Transverse colon (tissue), 4 donors: ENCODE measurements at regions of chr21 and their contacts with region 1.

Region 1: DNA sequence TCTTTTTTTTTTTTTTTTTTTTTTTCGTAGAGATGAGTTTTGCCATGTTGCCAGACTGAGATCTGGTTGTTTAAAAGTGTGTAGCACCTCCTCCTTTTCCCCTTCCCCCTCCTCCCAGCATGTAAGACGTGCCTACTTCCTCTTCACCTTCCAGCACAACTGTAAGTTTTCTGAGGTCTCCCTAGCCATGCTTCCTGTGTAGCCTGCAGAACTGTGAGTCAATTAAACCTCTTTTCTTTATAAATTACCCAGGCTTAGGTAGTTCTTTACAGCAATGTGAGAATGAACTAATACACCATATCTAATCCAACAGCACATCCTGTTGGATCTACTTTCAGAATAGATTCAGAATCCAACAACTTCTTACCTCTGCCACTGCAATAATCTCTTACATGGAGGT is 111.1 kb downstream of the CLIC6 start:
- DNase-seq: no peak
- H3K4me3 ChIP-seq: no peak overlapping the region
- H3K27ac ChIP-seq: no peak overlapping the region
- H3K4me1 ChIP-seq: peaks cover 0 to 4% (median 0%) of the 10 kb centered on the region in 4 donors
- H3K27me3 ChIP-seq: no peaks in the 10 kb centered on the region
- CTCF ChIP-seq: no peak
- EP300 ChIP-seq: no peak
- POLR2A ChIP-seq: no peak

Region 2: DNA sequence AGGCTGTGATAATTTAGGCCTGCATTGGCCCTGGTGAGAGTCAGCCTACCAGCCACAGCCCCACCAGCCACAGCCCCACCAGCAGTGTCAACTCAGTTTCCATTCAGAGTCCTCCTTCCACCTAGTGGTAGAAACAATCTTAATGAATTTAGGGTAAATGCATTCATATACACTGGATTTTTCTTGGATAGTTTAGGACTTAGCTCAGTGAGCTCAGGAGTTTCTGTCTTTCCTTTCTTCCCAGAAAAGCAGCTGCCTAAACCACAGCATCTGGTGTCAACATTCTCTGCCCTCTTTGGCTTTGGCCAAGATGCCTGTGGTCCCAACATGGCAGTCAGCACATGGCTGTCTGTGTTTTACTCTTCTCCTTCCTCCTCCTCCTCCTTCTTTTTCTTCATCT is 17.1 kb before region 1 on chr21:
- in situ Hi-C with region 1: no loop called
- intact Hi-C with region 1: no loop called
- DNase-seq: no peak
- H3K4me3 ChIP-seq: no peak overlapping the region
- H3K27ac ChIP-seq: no peak overlapping the region
- H3K4me1 ChIP-seq: no peaks in the 10 kb centered on the region
- H3K27me3 ChIP-seq: no peaks in the 10 kb centered on the region
- CTCF ChIP-seq: no peak
- EP300 ChIP-seq: no peak
- POLR2A ChIP-seq: no peak

Region 3: DNA sequence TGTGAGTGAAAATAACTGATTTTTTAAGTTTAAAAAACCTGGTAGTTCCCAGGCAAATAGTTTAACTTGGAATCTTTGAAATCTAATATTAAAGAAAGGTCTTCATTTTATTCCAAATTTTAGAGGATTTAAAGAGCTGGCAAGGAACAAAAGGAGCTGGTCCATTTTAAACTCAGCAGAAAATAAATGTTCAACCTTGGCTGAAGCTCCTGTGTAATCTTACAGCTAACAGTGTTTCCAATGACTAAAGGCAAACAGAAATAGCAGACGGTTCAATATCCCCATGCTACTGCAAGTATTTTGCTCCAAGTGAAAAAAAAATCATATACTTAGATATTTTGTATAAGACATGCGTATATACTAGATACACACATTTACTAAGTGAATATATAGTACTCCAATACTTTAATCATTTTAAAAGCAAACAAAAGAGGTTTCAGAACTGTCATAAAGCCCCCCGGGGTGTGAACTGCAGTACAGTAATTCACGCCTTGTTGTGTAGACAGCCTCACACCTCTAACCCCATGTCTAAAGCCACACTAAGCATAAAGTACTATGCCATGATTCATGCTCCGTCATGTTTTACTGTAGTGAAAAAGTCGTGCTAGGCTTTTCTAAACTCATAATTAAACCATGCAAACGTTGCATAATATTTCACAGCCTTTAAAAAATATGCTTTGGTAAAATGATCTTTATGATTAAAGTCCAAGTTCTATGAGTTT is 21.1 kb after region 1 on chr21:
- in situ Hi-C with region 1: no loop called
- intact Hi-C with region 1: loop called (anchors 1 kb)
- DNase-seq: no peak
- H3K4me3 ChIP-seq: no peak overlapping the region
- H3K27ac ChIP-seq: peak overlapping the region in 3 of 4 donors; percentile 18 to 34 (median 22)
- H3K4me1 ChIP-seq: peaks cover 9 to 50% (median 28%) of the 10 kb centered on the region in 4 donors
- H3K27me3 ChIP-seq: no peaks in the 10 kb centered on the region
- CTCF ChIP-seq: no peak
- EP300 ChIP-seq: no peak
- POLR2A ChIP-seq: no peak